IMR-90 (cell line): ENCODE measurements at regions of chr17 and their contacts with region 1.

Region 1: DNA sequence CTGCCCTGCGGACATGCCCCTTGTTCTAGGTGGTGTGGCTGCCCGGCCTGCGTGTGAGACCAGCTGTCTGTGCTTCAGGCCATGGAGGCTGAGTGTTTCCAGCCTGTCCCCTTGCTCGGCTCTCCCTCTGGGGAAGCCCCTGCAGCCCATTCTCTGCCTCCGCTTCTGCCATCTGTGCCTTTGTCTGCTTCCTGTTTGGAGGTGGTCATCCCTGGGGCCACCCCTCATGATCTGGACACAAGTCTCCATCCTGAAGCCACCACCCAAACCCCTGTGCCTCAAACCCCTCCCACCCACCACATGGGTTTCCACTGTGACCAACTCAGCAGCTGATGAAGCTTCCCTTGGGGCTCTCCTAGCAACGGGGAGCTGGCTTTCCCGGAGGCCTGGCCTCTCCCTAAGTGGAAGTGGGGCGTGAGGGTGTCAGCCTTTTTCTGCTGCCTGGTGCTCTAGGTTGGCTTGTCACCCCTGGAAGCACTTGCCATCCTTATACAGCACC is 184.9 kb downstream of the SEC14L1 start:
- DNase-seq: no peak
- ATAC-seq: no peak
- H3K4me3 ChIP-seq: no peak overlapping the region
- H3K27ac ChIP-seq: peak overlapping the region; percentile 76
- H3K4me1 ChIP-seq: peaks cover 34% of the 10 kb centered on the region
- H3K27me3 ChIP-seq: no peaks in the 10 kb centered on the region
- CTCF ChIP-seq: no peak
- POLR2A ChIP-seq: 0 out of 2 replicates have a peak, but pooled peaks have one; percentile 16
- RAD21 ChIP-seq: no peak

Region 2: GRCh38 chr17:77254951-77255825 is 70.4 kb before region 1 on chr17:
- CTCF ChIA-PET with region 1: interaction called, 6 read pairs
- POLR2A ChIA-PET with region 1: no interaction called
- dilution Hi-C with region 1: no loop called
- in situ Hi-C with region 1: no loop called
- intact Hi-C with region 1: loop called (anchors 1 kb)
- DNase-seq: peak; percentile 86
- ATAC-seq: peak; percentile 66
- H3K4me3 ChIP-seq: no peak overlapping the region
- H3K27ac ChIP-seq: peak overlapping the region; percentile 48
- H3K4me1 ChIP-seq: peaks cover 29% of the 10 kb centered on the region
- H3K27me3 ChIP-seq: no peaks in the 10 kb centered on the region
- CTCF ChIP-seq: no peak
- POLR2A ChIP-seq: no peak; the same call in 1 of the 2 replicates
- RAD21 ChIP-seq: no peak

Region 3: GRCh38 chr17:77494664-77495435 is 169.2 kb after region 1 on chr17:
- CTCF ChIA-PET with region 1: no interaction called
- POLR2A ChIA-PET with region 1: no interaction called
- dilution Hi-C with region 1: no loop called
- in situ Hi-C with region 1: loop called (anchors 5 kb)
- intact Hi-C with region 1: no loop called
- DNase-seq: peak; percentile 68
- ATAC-seq: peak; percentile 87
- H3K4me3 ChIP-seq: no peak overlapping the region
- H3K27ac ChIP-seq: no peak overlapping the region
- H3K4me1 ChIP-seq: peaks cover 3% of the 10 kb centered on the region; the same call in 1 of the 2 replicates
- H3K27me3 ChIP-seq: no peaks in the 10 kb centered on the region
- CTCF ChIP-seq: peak; percentile 85
- POLR2A ChIP-seq: no peak
- RAD21 ChIP-seq: peak; percentile 94

Region 4: DNA sequence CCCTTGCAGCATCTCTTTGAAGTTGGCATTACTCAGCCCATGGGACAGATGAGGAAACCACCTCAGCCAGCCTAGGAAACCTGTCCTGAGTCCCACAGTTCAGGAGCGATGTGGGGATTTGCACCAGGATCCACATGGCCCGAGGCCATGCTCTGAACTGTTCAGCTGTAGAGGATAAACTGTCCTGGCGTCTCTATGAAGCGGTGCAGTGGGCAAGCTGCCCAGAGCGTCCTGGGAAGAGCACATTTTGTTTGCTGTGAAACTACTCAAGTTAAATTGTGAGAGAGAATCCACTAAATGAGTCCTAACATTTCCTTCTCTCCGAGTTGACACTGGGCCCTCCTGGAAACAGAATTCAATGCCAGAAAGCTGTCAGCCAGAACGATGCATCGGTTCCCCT is 356.2 kb after region 1 on chr17:
- CTCF ChIA-PET with region 1: no interaction called
- POLR2A ChIA-PET with region 1: no interaction called
- dilution Hi-C with region 1: no loop called
- in situ Hi-C with region 1: no loop called
- intact Hi-C with region 1: no loop called
- DNase-seq: peak; percentile 1
- ATAC-seq: no peak
- H3K4me3 ChIP-seq: no peak overlapping the region
- H3K27ac ChIP-seq: no peak overlapping the region
- H3K4me1 ChIP-seq: no peaks in the 10 kb centered on the region
- H3K27me3 ChIP-seq: peaks cover 34% of the 10 kb centered on the region
- CTCF ChIP-seq: no peak
- POLR2A ChIP-seq: no peak
- RAD21 ChIP-seq: no peak